Pancreas (tissue), 10 donors: ENCODE measurements at regions of chr20 and their contacts with region 1.

Region 1: DNA sequence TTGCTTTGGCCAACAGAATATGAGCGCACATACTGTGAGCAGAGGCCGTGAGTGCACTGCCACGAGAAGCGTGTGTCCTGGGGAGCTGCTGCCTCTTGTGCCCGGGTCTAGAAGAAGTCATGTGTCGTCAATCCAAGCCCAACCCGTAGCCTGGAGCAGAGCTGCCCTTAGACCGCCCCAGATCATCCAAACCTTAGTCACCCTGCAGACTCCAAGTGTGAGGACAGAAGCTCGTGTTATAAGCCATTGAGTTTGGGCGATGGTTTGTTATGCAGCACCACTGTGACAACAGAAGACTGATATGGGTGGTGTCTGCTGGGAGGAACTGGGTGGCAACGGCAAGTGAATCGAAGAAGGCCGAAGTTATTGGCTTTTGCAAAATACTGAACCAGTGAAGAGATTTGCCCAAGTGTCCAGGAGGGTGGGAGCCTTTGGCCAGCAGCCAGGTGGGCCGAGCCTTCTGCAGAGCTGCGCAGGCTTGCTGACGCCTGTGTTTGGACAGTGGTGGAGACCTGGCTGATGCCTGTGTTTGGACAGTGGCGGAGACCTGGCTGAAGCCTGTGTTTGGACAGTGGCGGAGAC is 101.3 kb upstream of the SULF2 start:
- DNase-seq: no peak
- ATAC-seq: no peak
- H3K4me3 ChIP-seq: no peak overlapping the region
- H3K27ac ChIP-seq: no peak overlapping the region
- H3K4me1 ChIP-seq: no peaks in the 10 kb centered on the region
- H3K27me3 ChIP-seq: no peaks in the 10 kb centered on the region
- CTCF ChIP-seq: no peak

Region 2: DNA sequence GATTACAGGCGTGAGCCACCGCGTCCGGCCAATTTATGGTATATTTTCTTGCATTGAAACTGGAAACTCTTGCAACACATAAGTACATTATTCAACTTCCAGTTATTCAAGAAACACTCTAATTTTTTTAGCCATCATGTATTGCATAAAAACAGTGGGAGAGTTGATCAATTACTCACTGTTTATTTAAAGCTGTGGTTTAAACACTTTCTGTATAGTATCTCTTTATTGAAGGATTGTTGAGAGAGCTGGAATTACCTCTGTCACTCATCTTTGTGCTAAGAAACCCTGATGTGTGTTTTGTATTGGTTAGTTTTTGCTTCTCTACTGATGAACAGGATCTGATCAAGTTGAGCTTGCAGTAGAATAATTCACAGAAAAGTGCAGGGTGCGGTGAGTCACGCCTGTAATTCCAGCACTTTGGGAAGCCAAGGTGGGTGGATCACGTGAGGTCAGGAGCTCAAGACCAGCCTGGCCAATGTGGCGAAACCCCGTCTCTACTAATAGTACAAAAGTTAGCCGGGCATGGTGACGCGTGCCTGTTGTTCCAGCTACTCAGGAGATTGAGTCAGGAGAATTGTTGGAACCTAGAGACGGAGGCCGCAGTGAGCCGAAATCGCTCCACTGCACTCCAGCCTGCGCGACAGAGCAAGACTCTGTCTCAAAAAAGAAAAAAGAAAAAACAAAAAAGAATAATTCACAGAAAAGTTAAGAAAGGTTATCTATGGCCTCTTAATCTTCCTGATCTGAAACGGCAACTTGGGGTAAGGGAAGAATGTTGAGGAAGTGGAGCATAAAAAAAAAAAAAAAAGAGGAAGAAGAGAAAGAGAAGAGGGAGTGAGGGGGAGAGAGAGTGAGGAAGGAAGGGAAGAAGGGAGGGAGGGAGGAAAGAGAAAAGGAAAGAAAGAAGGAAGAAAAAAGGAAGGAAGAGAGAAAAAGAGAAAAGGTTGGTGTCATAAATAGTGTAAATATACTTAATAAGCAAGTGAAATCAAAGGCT is 454.0 kb before region 1 on chr20:
- intact Hi-C with region 1: no loop called
- DNase-seq: no peak
- ATAC-seq: no peak
- H3K4me3 ChIP-seq: no peak overlapping the region
- H3K27ac ChIP-seq: no peak overlapping the region
- H3K4me1 ChIP-seq: no peaks in the 10 kb centered on the region
- H3K27me3 ChIP-seq: no peaks in the 10 kb centered on the region
- CTCF ChIP-seq: no peak

Region 3: DNA sequence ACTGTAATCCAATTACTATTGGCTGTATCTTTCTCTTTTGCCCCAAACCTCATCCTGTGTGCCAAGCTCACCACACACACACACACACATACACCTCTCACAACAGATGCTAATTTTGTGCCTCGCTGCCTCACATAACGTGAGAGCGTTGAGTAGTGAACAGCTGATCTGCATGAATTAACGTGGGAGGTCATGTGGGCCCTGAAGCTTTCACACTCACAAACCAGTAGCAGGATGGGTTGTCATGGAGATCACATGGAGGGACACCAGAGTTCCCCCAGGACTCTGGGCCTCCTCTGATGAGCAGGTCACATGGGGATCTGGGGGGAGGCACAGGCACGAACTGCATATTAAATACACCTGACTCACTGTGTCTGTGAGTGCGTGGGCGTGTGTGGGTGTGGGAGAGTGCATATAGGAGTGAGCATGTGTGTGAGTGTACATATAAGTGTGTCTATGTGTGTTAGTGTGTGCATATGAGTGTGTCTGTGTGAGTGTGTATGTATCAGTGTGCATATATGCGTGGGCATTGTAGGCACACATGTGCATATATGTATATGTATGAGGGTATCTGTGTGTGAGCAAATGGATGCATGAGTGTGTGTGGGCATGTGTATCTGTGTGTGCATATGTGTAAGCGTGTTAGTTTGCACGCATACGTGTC is 38.6 kb before region 1 on chr20:
- intact Hi-C with region 1: loop called in 2 of 3 experiments (anchors 10 kb)
- DNase-seq: no peak
- ATAC-seq: peak in 1 of 4 donors; percentile 35
- H3K4me3 ChIP-seq: no peak overlapping the region
- H3K27ac ChIP-seq: no peak overlapping the region
- H3K4me1 ChIP-seq: no peaks in the 10 kb centered on the region
- H3K27me3 ChIP-seq: no peaks in the 10 kb centered on the region
- CTCF ChIP-seq: no peak

Region 4: GRCh38 chr20:48523212-48523941 is 636.8 kb after region 1 on chr20:
- intact Hi-C with region 1: loop called in 1 of 3 experiments (anchors 10 kb)
- DNase-seq: no peak
- ATAC-seq: peak in 2 of 4 donors; percentile 58 to 83
- H3K4me3 ChIP-seq: no peak overlapping the region
- H3K27ac ChIP-seq: no peak overlapping the region
- H3K4me1 ChIP-seq: no peaks in the 10 kb centered on the region
- H3K27me3 ChIP-seq: peaks cover 0 to 3% (median 0%) of the 10 kb centered on the region in 4 donors
- CTCF ChIP-seq: no peak